ENCODE measurements at regions of chr7 and their contacts with region 1.

Region 1: DNA sequence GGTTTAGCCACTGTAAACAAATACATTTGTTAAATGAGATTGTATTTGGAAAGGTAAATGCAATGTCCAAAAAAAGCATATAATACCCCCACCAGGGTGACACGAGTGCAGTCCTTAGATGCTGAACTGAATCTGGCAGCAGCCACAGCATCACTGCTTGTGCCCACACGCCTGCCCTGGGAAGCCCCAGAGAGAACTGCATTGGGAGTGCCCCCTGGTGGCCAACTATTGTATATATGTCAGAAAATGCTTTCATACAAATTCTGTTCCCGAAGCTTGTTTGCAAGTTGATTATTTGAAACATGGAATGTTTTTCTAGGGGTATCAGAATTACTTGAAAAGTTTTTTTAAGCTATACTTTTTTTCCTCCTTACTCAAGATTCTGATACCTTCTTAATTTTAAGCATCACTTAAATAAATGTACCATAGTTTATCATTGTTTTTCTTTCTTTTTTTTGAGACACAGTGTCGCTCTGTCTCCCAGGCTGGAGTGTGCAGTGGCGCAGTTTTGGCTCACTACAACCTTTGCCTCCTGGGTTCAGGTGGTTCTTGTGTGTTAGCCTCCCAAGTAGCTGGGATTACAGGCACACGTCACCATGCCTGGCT is 50.1 kb downstream of the LANCL2 start:
- DNase-seq: peak; percentile 92
- ATAC-seq: peak; percentile 93
- H3K4me3 Mint-ChIP-seq: no peak overlapping the region
- H3K27ac Mint-ChIP-seq: no peak overlapping the region
- H3K4me1 Mint-ChIP-seq: peaks cover 2% of the 10 kb centered on the region
- H3K27me3 Mint-ChIP-seq: no peaks in the 10 kb centered on the region

Region 2: DNA sequence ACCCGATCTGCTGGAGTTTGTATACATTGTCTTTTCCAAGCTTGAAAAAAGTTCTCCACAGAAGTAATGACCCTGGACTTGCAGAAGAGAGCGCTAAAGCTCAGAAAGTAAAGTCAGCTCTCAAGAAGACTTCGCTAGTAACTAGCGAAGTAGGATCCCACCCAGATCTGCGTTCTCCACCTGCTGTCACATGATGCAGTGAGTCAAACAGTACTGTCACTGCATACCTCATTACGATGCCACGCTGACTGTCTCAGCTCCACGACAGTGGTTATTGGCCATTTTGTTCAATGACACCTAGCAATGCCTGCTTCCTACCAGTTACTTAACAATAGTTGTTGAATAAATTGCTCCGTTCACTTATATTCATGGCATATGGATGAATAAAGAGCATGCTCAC is 626.6 kb before region 1 on chr7:
- CTCF ChIA-PET with region 1: no interaction called
- POLR2A ChIA-PET with region 1: no interaction called
- intact Hi-C with region 1: loop called in 1 of 2 experiments (anchors 5 kb)
- DNase-seq: peak; percentile 68
- ATAC-seq: peak; percentile 100
- H3K4me3 Mint-ChIP-seq: no peak overlapping the region
- H3K27ac Mint-ChIP-seq: no peak overlapping the region
- H3K4me1 Mint-ChIP-seq: peaks cover 6% of the 10 kb centered on the region
- H3K27me3 Mint-ChIP-seq: peaks cover 38% of the 10 kb centered on the region

Region 3: DNA sequence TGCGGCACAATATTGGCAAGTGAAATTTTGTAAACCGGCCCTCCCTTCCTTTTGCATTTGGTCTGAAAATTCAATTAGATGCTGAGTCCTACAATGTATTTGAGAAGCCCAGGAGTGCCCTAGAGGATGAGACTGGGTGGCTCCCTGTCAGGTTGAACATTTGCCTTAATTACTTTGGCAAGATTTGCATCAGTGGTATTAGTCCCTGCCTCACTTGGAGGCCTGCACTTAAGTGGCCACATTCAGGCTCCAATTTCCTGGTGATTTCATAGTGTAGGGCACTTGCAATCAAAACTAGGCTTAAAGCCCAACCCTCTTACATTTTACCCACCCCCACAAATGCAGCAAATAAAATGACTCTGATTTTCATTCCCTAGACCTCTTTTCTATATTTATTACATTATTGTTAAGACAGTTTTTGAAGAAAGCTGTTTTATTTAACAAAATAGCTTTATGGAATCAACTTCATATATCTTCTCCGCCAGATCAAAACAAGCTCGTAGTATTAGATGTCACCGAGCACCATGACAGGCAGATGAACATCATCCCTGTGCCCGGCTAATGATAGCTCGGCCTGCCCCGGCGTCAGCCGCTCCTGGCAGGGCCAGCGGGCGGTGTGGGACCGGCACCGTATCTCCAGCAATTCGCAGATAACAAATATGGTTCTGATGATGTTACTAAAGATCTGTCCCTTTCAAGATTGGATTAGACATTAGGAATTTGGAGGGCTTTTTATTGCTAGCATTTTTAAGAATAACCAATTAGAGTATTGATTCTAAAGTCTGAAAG is 322.9 kb before region 1 on chr7:
- CTCF ChIA-PET with region 1: no interaction called
- POLR2A ChIA-PET with region 1: no interaction called
- intact Hi-C with region 1: no loop called
- DNase-seq: no peak
- ATAC-seq: no peak
- H3K4me3 Mint-ChIP-seq: no peak overlapping the region
- H3K27ac Mint-ChIP-seq: no peak overlapping the region
- H3K4me1 Mint-ChIP-seq: peaks cover 3% of the 10 kb centered on the region
- H3K27me3 Mint-ChIP-seq: peaks cover 18% of the 10 kb centered on the region

Region 4: GRCh38 chr7:55280031-55280454 is 135.2 kb before region 1 on chr7:
- CTCF ChIA-PET with region 1: interaction called, 53 read pairs
- POLR2A ChIA-PET with region 1: no interaction called
- intact Hi-C with region 1: loop called (anchors 1 kb)
- DNase-seq: peak; percentile 77
- ATAC-seq: peak; percentile 82
- H3K4me3 Mint-ChIP-seq: no peak overlapping the region
- H3K27ac Mint-ChIP-seq: no peak overlapping the region
- H3K4me1 Mint-ChIP-seq: no peaks in the 10 kb centered on the region
- H3K27me3 Mint-ChIP-seq: no peaks in the 10 kb centered on the region

Region 5: GRCh38 chr7:55641273-55641691 is 226.0 kb after region 1 on chr7:
- CTCF ChIA-PET with region 1: no interaction called
- POLR2A ChIA-PET with region 1: no interaction called
- intact Hi-C with region 1: no loop called
- DNase-seq: peak; percentile 45
- ATAC-seq: peak; percentile 89
- H3K4me3 Mint-ChIP-seq: no peak overlapping the region
- H3K27ac Mint-ChIP-seq: no peak overlapping the region
- H3K4me1 Mint-ChIP-seq: peaks cover 9% of the 10 kb centered on the region
- H3K27me3 Mint-ChIP-seq: peaks cover 2% of the 10 kb centered on the region

Region 6: GRCh38 chr7:55903985-55904759 is 488.9 kb after region 1 on chr7:
- CTCF ChIA-PET with region 1: no interaction called
- POLR2A ChIA-PET with region 1: no interaction called
- intact Hi-C with region 1: no loop called
- DNase-seq: no peak
- ATAC-seq: no peak
- H3K4me3 Mint-ChIP-seq: no peak overlapping the region
- H3K27ac Mint-ChIP-seq: no peak overlapping the region
- H3K4me1 Mint-ChIP-seq: no peaks in the 10 kb centered on the region
- H3K27me3 Mint-ChIP-seq: no peaks in the 10 kb centered on the region

Measured in activated CD4-positive, alpha-beta T cell treated with anti-CD3 and anti-CD28 coated beads for 36 hours (primary cell).